Heart left ventricle (tissue), 16 donors: ENCODE measurements at regions of chr4 and their contacts with region 1.

Region 1: GRCh38 chr4:105563352-105563751 is 10.9 kb downstream of the ARHGEF38 start:
- DNase-seq: no peak
- ATAC-seq: peak in 2 of 4 donors; percentile 42 to 65
- H3K4me3 ChIP-seq: no peak overlapping the region
- H3K27ac ChIP-seq: no peak overlapping the region
- H3K4me1 ChIP-seq: peaks cover 0 to 6% (median 0%) of the 10 kb centered on the region in 12 donors
- H3K27me3 ChIP-seq: no peaks in the 10 kb centered on the region
- CTCF ChIP-seq: no peak
- POLR2A ChIP-seq: no peak

Region 2: GRCh38 chr4:105548483-105548882 is 14.9 kb before region 1 on chr4:
- intact Hi-C with region 1: no loop called
- DNase-seq: no peak
- ATAC-seq: no peak
- H3K4me3 ChIP-seq: no peak overlapping the region
- H3K27ac ChIP-seq: no peak overlapping the region
- H3K4me1 ChIP-seq: peaks cover 0 to 5% (median 0%) of the 10 kb centered on the region in 12 donors
- H3K27me3 ChIP-seq: no peaks in the 10 kb centered on the region
- CTCF ChIP-seq: no peak
- POLR2A ChIP-seq: no peak

Region 3: GRCh38 chr4:105637408-105638176 is 74.2 kb after region 1 on chr4:
- intact Hi-C with region 1: loop called in 1 of 10 experiments (anchors 2 kb)
- DNase-seq: peak; percentile 61 to 88 (median 70)
- ATAC-seq: peak; percentile 86 to 93 (median 90)
- H3K4me3 ChIP-seq: no peak overlapping the region
- H3K27ac ChIP-seq: peak overlapping the region in 4 of 12 donors; percentile 9 to 41 (median 33)
- H3K4me1 ChIP-seq: peaks cover 0 to 45% (median 26%) of the 10 kb centered on the region in 12 donors
- H3K27me3 ChIP-seq: no peaks in the 10 kb centered on the region
- CTCF ChIP-seq: no peak
- POLR2A ChIP-seq: no peak